Aorta (tissue), 5 donors: ENCODE measurements at regions of chr17 and their contacts with region 1.

Region 1: GRCh38 chr17:60435244-60436167 is 13.2 kb downstream of the CHCT1 start:
- DNase-seq: peak; percentile 70 to 81
- ATAC-seq: peak; percentile 96
- H3K4me3 ChIP-seq: no peak overlapping the region
- H3K27ac ChIP-seq: peak overlapping the region in 1 of 2 donors; percentile 12
- H3K4me1 ChIP-seq: no peaks in the 10 kb centered on the region
- H3K27me3 ChIP-seq: no peaks in the 10 kb centered on the region

Region 2: DNA sequence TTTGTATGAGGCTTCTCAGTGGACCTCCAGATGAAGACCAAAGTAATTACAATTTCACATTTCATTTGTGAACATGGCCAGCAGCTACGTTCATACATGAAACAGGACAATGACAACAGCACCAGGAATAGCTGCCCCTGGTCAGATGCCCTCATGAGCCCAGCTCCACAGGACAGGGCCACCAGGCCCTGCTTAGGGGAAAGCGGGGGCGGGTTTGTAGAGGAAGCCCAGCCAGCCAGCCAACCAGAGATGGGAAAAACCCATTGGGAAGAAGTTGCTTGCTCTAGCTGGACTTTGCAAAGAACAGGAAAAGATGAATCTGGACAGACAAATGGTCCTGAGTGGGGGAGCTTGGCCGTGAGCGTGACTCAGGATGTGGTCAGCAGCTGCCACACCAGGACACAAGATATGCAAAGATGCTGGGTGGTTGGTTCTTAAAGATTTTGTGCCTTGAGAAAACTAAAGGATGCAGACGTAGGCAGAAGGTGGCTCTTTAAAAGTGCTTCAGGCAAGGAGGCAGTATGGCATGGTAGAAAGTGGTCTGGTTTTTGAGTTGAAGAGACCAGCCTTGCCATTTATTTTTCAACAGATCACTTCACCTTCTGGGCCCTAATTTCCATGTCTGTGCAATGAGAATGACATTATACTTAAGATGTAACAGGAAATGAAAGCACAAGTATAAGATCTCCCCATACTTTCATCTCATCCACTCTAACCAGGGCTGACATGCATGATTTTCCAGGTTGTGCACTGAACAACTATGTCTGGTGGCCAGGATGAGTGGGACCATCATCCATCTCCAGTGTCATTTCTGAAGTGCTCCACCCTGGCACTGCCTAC is 329.1 kb before region 1 on chr17:
- intact Hi-C with region 1: loop called in 1 of 2 experiments (anchors 5 kb)
- DNase-seq: no peak
- ATAC-seq: no peak
- H3K4me3 ChIP-seq: no peak overlapping the region
- H3K27ac ChIP-seq: no peak overlapping the region
- H3K4me1 ChIP-seq: no peaks in the 10 kb centered on the region
- H3K27me3 ChIP-seq: no peaks in the 10 kb centered on the region

Region 3: DNA sequence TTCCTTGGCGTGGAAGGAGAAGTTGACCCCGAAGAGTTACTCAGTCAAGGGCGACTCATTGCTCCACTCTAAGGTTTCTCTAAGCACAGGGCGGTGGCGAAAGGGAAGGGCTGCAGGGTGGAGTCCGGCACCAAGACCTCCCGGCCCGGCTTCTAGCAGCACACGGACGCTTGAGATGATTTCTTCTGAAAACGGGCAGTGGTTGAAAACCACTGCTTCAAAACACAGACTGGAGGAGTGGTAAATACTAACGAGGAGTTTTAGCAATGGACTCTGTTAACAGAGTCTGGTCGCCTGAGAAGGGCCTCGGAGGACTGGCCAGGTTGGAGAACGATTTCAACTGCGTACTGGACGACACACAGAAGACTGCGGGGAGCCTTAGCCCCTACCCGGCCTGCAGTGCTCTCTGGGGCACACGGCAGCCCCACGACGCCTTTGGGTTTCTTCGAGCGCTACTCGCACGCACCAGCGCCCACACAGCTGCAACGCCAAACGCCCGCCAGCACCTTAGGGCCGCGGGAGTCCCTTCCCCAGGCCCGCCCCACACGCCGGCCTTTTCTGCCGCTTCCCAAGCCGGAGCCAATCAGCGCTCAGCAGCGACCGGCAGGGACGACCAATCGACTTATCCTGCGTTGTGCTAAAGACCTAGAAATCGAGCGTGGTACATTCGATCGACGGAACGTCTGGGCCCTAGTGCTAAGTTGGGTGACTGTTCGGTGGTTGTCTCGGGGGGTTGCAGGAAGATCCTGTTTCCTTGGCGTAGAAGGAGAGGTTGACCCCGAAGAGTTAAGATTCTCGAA is 300.2 kb before region 1 on chr17:
- intact Hi-C with region 1: loop called (anchors 5 to 10 kb)
- DNase-seq: peak; percentile 92 to 96
- ATAC-seq: peak; percentile 97
- H3K4me3 ChIP-seq: peak overlapping the region; percentile 43 to 57
- H3K27ac ChIP-seq: no peak overlapping the region
- H3K4me1 ChIP-seq: no peaks in the 10 kb centered on the region
- H3K27me3 ChIP-seq: no peaks in the 10 kb centered on the region

Region 4: GRCh38 chr17:60142872-60143499 is 292.5 kb before region 1 on chr17:
- intact Hi-C with region 1: loop called (anchors 5 to 10 kb)
- DNase-seq: peak; percentile 91 to 92
- ATAC-seq: peak; percentile 77
- H3K4me3 ChIP-seq: no peak overlapping the region
- H3K27ac ChIP-seq: no peak overlapping the region
- H3K4me1 ChIP-seq: no peaks in the 10 kb centered on the region
- H3K27me3 ChIP-seq: no peaks in the 10 kb centered on the region

Region 5: DNA sequence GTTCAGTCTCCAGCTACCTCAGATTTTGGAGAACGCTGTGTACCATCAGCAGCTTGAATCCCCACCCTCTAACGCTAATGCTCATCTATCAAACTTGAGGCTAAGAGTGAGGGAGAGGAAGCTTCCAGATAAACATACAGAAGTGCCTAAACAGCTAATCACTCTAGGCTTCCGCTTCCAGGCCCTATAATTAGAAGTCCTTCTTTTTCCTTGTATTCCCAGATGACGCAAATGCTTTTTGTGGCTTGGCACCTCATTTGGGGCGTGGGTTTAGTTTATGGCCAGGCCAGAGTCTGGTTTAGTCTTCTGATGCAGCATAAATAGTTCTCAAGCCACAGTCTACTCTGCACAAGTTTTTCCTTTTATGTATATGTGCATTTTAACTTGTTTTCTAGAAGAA is 505.5 kb after region 1 on chr17:
- intact Hi-C with region 1: no loop called
- DNase-seq: peak; percentile 83 to 85
- ATAC-seq: peak; percentile 83
- H3K4me3 ChIP-seq: no peak overlapping the region
- H3K27ac ChIP-seq: peak overlapping the region in 1 of 2 donors; percentile 92
- H3K4me1 ChIP-seq: peaks cover 0 to 3% of the 10 kb centered on the region in 2 donors
- H3K27me3 ChIP-seq: no peaks in the 10 kb centered on the region